ENCODE measurements at regions of chr18 and their contacts with region 1.

Region 1: GRCh38 chr18:3129053-3129864 is 90.5 kb downstream of the MYOM1 start:
- DNase-seq: peak; percentile 92
- ATAC-seq: peak; percentile 99
- H3K4me3 Mint-ChIP-seq: no peak overlapping the region
- H3K27ac Mint-ChIP-seq: no peak overlapping the region
- H3K4me1 Mint-ChIP-seq: peaks cover 10% of the 10 kb centered on the region
- H3K27me3 Mint-ChIP-seq: no peaks in the 10 kb centered on the region

Region 2: GRCh38 chr18:2302614-2303516 is 826.4 kb before region 1 on chr18:
- CTCF ChIA-PET with region 1: no interaction called
- POLR2A ChIA-PET with region 1: no interaction called
- intact Hi-C with region 1: no loop called
- DNase-seq: no peak
- ATAC-seq: no peak
- H3K4me3 Mint-ChIP-seq: no peak overlapping the region
- H3K27ac Mint-ChIP-seq: no peak overlapping the region
- H3K4me1 Mint-ChIP-seq: no peaks in the 10 kb centered on the region
- H3K27me3 Mint-ChIP-seq: peaks cover 26% of the 10 kb centered on the region

Region 3: DNA sequence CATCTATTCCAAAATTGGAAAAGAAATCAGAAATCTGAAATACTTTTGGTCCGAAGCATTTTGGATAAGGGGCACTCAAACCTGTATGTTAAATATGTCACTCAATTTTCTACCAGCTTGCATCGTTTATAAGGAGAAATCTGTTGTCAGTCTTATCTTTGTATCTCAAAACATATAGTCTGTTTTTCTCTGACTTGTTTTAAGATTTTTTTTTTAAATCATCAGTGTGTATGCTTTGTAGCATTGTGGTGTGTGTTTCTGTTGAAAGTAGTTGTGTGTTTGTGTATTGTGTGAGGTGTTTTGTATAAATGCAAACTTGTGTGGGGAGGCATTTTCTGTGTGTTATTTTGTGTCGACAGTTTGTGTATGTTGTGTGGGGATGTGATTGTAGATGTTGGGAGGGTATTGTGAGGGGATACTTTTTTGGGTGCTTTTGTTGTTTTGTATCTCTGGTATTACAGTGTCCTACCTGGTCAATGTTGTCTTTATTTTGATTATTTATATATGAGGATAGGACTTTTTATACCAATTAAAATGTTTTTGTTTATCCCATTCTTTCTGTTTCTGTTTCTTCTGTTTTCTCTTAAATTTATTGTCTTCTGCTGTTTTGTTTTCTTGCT is 442.8 kb before region 1 on chr18:
- CTCF ChIA-PET with region 1: no interaction called
- POLR2A ChIA-PET with region 1: no interaction called
- intact Hi-C with region 1: no loop called
- DNase-seq: no peak
- ATAC-seq: no peak
- H3K4me3 Mint-ChIP-seq: no peak overlapping the region
- H3K27ac Mint-ChIP-seq: peak overlapping the region; percentile 81
- H3K4me1 Mint-ChIP-seq: peaks cover 70% of the 10 kb centered on the region
- H3K27me3 Mint-ChIP-seq: no peaks in the 10 kb centered on the region

Region 4: GRCh38 chr18:2932247-2933181 is 196.7 kb before region 1 on chr18:
- CTCF ChIA-PET with region 1: interaction called, 45 read pairs
- POLR2A ChIA-PET with region 1: no interaction called
- intact Hi-C with region 1: loop called (anchors 1 kb)
- DNase-seq: peak; percentile 50
- ATAC-seq: peak; percentile 60
- H3K4me3 Mint-ChIP-seq: no peak overlapping the region
- H3K27ac Mint-ChIP-seq: peak overlapping the region; percentile 81
- H3K4me1 Mint-ChIP-seq: peaks cover 41% of the 10 kb centered on the region
- H3K27me3 Mint-ChIP-seq: no peaks in the 10 kb centered on the region

Region 5: DNA sequence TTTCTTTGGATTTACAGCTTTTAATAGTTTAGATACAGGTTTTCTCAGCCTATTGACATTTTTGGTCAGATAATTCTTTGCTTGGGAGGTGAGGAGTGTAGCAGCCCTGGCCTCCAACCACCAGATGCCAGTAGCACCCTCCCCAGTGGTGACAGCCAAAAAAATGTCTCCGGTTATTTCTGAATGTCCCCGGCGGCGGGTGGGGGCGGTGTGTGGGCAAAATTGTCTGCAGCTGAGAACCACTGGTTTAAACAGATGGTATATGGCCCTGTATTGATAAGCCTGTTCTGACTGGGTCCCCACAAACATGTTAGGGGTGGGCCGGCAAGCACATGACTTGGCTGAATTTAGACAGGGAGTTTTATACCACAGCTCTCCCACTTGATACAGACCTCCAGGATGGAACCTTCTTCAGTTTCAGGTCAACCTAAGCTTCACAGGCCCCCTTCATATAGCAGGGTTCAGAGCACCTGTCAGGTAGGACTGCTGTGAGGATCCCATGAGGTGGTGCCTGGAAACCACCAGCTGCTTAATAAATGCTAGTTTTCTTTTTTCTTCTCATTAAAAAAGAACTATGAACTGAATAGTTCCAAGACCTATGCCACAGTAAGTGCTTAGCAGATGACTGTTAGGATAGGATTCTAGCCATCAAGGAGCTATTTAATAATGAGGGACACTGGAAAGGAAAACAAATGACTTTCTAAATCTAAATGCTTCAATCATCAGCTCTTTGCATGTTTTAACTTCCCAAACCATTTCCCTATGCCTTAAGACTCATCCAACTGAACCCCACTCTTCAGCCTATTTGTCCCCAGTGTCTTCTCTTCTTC is 134.4 kb before region 1 on chr18:
- CTCF ChIA-PET with region 1: interaction called, 38 read pairs
- POLR2A ChIA-PET with region 1: no interaction called
- intact Hi-C with region 1: loop called (anchors 1 kb)
- DNase-seq: peak; percentile 85
- ATAC-seq: peak; percentile 38
- H3K4me3 Mint-ChIP-seq: no peak overlapping the region
- H3K27ac Mint-ChIP-seq: peak overlapping the region; percentile 80
- H3K4me1 Mint-ChIP-seq: peaks cover 90% of the 10 kb centered on the region
- H3K27me3 Mint-ChIP-seq: no peaks in the 10 kb centered on the region

Region 6: GRCh38 chr18:3117493-3118192 is 11.6 kb before region 1 on chr18:
- CTCF ChIA-PET with region 1: interaction called, 24 read pairs
- POLR2A ChIA-PET with region 1: no interaction called
- intact Hi-C with region 1: no loop called
- DNase-seq: no peak
- ATAC-seq: no peak
- H3K4me3 Mint-ChIP-seq: no peak overlapping the region
- H3K27ac Mint-ChIP-seq: no peak overlapping the region
- H3K4me1 Mint-ChIP-seq: no peaks in the 10 kb centered on the region
- H3K27me3 Mint-ChIP-seq: no peaks in the 10 kb centered on the region

Region 7: GRCh38 chr18:3179430-3180089 is 50.3 kb after region 1 on chr18:
- CTCF ChIA-PET with region 1: interaction called, 10 read pairs
- POLR2A ChIA-PET with region 1: no interaction called
- intact Hi-C with region 1: no loop called
- DNase-seq: no peak
- ATAC-seq: no peak
- H3K4me3 Mint-ChIP-seq: no peak overlapping the region
- H3K27ac Mint-ChIP-seq: no peak overlapping the region
- H3K4me1 Mint-ChIP-seq: no peaks in the 10 kb centered on the region
- H3K27me3 Mint-ChIP-seq: no peaks in the 10 kb centered on the region

Region 8: GRCh38 chr18:3368193-3368592 is 238.9 kb after region 1 on chr18:
- CTCF ChIA-PET with region 1: no interaction called
- POLR2A ChIA-PET with region 1: no interaction called
- intact Hi-C with region 1: no loop called
- DNase-seq: no peak
- ATAC-seq: no peak
- H3K4me3 Mint-ChIP-seq: no peak overlapping the region
- H3K27ac Mint-ChIP-seq: no peak overlapping the region
- H3K4me1 Mint-ChIP-seq: peaks cover 2% of the 10 kb centered on the region
- H3K27me3 Mint-ChIP-seq: peaks cover 6% of the 10 kb centered on the region